ENCODE measurements at regions of chr17 and their contacts with region 1.

Region 1: DNA sequence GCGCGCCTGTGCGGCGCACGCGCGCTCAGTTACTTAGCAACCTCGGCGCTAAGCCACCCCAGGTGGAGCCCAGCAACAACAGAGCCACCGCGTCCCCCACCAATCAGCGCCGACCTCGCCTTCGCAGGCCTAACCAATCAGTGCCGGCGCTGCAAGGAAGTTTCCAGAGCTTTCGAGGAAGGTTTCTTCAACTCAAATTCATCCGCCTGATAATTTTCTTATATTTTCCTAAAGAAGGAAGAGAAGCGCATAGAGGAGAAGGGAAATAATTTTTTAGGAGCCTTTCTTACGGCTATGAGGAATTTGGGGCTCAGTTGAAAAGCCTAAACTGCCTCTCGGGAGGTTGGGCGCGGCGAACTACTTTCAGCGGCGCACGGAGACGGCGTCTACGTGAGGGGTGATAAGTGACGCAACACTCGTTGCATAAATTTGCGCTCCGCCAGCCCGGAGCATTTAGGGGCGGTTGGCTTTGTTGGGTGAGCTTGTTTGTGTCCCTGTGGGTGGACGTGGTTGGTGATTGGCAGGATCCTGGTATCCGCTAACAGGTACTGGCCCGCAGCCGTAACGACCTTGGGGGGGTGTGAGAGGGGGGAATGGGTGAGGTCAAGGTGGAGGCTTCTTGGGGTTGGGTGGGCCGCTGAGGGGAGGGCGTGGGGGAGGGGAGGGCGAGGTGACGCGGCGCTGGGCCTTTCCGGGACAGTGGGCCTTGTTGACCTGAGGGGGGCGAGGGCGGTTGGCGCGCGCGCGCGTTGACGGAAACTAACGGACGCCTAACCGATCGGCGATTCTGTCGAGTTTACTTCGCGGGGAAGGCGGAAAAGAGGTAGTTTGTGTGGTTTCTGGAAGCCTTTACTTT is at the start of gene UBB:
- DNase-seq: peak; percentile 99
- ATAC-seq: peak; percentile 96
- H3K4me3 ChIP-seq: peak within 1 kb of the TSS; percentile 82
- H3K27ac ChIP-seq: peak within 1 kb of the TSS; percentile 97
- H3K4me1 ChIP-seq: peaks cover 4% of the 10 kb centered on the region; the same call in 1 of the 2 replicates
- H3K27me3 ChIP-seq: no peaks in the 10 kb centered on the region
- CTCF ChIP-seq: 0 out of 2 replicates have a peak, but pooled peaks have one; percentile 11
- POLR2A ChIP-seq: peak; percentile 99
- RAD21 ChIP-seq: no peak
- total RNA-seq, gene UBB: 3,383 and 4,283 TPM in 2 replicates

Region 2: DNA sequence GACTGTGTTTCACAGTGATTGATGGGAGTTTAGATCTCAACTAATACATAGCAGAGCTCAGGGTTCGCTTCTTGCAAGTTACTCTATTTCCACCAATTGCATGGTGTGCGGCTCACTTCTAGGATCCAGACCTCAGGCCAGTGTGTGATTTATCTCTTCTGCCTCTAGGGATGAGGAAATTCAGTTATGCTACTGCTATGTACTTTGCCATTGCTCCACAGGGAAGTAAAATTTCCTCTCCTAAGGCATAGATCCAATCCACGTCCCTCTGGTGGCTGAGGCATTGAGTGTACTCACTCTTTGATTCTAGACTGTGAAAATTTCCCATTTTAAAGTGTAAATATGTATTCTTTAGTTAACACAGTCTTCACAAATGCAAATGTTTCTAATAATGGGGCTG is 1865.9 kb before region 1 on chr17:
- CTCF ChIA-PET with region 1: no interaction called
- POLR2A ChIA-PET with region 1: no interaction called
- dilution Hi-C with region 1: no loop called
- in situ Hi-C with region 1: no loop called
- intact Hi-C with region 1: no loop called
- DNase-seq: no peak
- ATAC-seq: no peak; the same call in 1 of the 2 replicates
- H3K4me3 ChIP-seq: no peak overlapping the region
- H3K27ac ChIP-seq: no peak overlapping the region
- H3K4me1 ChIP-seq: no peaks in the 10 kb centered on the region
- H3K27me3 ChIP-seq: no peaks in the 10 kb centered on the region; the same call in 1 of the 2 replicates
- CTCF ChIP-seq: no peak
- POLR2A ChIP-seq: no peak
- RAD21 ChIP-seq: no peak

Region 3: DNA sequence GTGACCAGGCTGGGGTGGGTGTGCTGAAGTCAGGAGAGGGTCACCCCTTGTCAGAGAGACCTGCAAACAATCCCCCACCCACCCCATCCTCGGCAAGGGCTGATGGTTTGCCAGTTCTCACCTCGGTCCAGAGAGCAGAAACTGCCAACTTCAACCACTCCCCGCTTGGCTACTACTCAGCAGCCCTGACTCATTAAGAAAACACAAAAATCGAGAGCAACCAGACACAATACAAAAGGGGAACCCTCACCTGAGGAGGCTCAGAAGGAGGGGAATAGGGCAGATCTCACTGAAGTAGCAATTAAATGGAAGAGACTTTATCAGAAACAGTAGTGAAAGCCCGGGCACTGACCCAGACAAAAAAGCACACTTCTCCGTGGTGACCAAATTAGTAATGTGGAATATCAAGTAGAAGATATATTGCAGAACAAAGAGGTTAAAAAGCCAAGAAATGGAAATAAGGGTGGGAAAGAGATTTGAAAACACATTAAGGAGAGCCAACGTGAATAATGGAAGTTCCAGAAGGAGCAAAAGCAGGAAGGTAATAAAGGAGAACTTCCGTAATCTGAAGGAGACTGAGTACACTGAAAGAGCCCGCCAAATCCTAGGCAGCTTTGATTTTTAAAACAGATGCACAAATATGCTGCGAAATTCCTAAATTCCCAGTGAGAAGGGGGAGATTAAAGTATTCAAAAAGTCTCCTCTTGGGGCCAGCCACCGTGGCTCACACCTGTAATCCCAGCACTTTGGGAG is 51.2 kb before region 1 on chr17:
- CTCF ChIA-PET with region 1: no interaction called
- POLR2A ChIA-PET with region 1: interaction called, 10 read pairs
- dilution Hi-C with region 1: no loop called
- in situ Hi-C with region 1: no loop called
- intact Hi-C with region 1: no loop called
- DNase-seq: peak; percentile 56
- ATAC-seq: peak; percentile 73
- H3K4me3 ChIP-seq: no peak overlapping the region
- H3K27ac ChIP-seq: no peak overlapping the region
- H3K4me1 ChIP-seq: no peaks in the 10 kb centered on the region
- H3K27me3 ChIP-seq: no peaks in the 10 kb centered on the region
- CTCF ChIP-seq: no peak
- POLR2A ChIP-seq: no peak
- RAD21 ChIP-seq: no peak

Region 4: GRCh38 chr17:16363749-16364536 is 16.9 kb before region 1 on chr17:
- CTCF ChIA-PET with region 1: interaction called, 10 read pairs
- POLR2A ChIA-PET with region 1: interaction called, 8 read pairs
- dilution Hi-C with region 1: no loop called
- in situ Hi-C with region 1: no loop called
- intact Hi-C with region 1: no loop called
- DNase-seq: peak; percentile 69
- ATAC-seq: peak; percentile 99
- H3K4me3 ChIP-seq: no peak overlapping the region
- H3K27ac ChIP-seq: no peak overlapping the region
- H3K4me1 ChIP-seq: no peaks in the 10 kb centered on the region
- H3K27me3 ChIP-seq: no peaks in the 10 kb centered on the region
- CTCF ChIP-seq: peak; percentile 90
- POLR2A ChIP-seq: no peak
- RAD21 ChIP-seq: peak; percentile 77

Region 5: GRCh38 chr17:16415031-16415924 is 34.4 kb after region 1 on chr17 and contains the start of gene TRPV2:
- CTCF ChIA-PET with region 1: no interaction called
- POLR2A ChIA-PET with region 1: no interaction called
- dilution Hi-C with region 1: no loop called
- in situ Hi-C with region 1: no loop called
- intact Hi-C with region 1: loop called (anchors 1 kb)
- DNase-seq: no peak
- ATAC-seq: peak; percentile 10; the same call in 1 of the 2 replicates
- H3K4me3 ChIP-seq: peak within 1 kb of the TSS; percentile 61
- H3K27ac ChIP-seq: peak within 1 kb of the TSS; percentile 65
- H3K4me1 ChIP-seq: peaks cover 33% of the 10 kb centered on the region
- H3K27me3 ChIP-seq: no peaks in the 10 kb centered on the region
- CTCF ChIP-seq: 0 out of 2 replicates have a peak, but pooled peaks have one; percentile 18
- POLR2A ChIP-seq: no peak
- RAD21 ChIP-seq: no peak
- total RNA-seq, gene TRPV2: 27.2 and 30.8 TPM in 2 replicates

Region 6: DNA sequence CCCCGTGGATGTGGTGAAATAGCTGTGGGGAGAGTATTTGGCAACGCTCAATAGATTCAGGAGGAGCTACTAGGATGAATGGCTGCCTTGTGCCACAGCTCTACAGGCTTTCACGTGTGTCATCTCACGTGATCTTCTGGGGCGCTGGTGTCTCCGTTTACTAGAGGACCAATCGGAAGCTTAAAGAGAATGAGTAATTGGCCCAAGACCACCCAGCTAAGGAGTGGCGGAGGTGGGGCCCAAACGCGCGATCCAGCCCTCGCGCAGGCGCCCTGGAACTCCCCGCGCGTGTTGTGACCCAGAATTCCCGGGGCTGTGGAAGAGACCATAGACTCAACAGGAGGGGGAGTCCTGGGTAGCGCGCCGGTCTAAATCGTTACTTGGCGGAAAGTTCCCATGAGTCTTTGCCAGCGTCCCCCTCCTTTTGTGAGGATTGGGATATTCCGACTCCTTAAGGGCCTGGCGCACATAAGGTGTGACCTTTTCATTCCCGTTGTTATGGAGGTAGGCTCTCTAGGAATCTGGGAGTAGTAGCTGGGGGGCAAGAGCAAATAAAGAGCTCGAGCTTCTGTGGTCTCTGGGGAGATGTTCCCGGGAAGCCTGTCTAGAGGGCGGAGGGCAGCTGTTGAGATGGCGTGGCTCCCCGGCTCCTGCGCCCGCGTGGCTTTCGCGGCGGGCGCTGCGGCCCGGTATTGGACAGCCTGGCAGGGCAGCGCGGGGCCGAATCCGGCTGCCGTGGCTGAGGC is 57.9 kb after region 1 on chr17:
- CTCF ChIA-PET with region 1: no interaction called
- POLR2A ChIA-PET with region 1: interaction called, 9 read pairs
- dilution Hi-C with region 1: no loop called
- in situ Hi-C with region 1: loop called (anchors 5 kb)
- intact Hi-C with region 1: loop called (anchors 1 kb)
- DNase-seq: peak; percentile 100
- ATAC-seq: peak; percentile 93
- H3K4me3 ChIP-seq: peak overlapping the region; percentile 67
- H3K27ac ChIP-seq: peak overlapping the region; percentile 87
- H3K4me1 ChIP-seq: peaks cover 17% of the 10 kb centered on the region
- H3K27me3 ChIP-seq: no peaks in the 10 kb centered on the region
- CTCF ChIP-seq: no peak
- POLR2A ChIP-seq: peak; percentile 99
- RAD21 ChIP-seq: peak; percentile 3; the same call in 1 of the 2 replicates

Region 7: DNA sequence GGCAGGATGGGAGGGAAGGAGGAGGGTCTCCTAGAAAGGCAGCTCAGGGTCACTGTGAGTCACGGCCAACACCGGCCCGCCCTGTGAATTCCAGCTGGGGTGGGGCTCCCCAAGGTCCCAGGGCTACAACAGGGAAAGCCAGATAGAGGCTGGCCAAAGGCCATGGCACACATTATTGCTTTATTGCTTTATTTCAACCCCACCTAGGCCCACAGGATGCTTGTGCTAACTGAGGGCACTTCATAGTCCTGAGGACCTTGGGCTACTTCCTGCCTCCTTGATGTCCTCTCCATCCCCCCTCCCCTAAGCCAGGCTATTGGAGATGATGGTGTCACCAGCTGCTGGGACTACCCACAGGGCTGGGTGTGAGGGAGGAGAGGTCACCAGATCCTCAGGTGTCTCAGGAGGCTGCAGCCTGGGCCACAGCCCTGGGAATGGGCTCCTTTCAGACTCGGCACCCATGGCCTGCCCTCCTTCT is 85.0 kb after region 1 on chr17:
- CTCF ChIA-PET with region 1: no interaction called
- POLR2A ChIA-PET with region 1: no interaction called
- dilution Hi-C with region 1: no loop called
- in situ Hi-C with region 1: no loop called
- intact Hi-C with region 1: no loop called
- DNase-seq: no peak
- ATAC-seq: no peak
- H3K4me3 ChIP-seq: no peak overlapping the region
- H3K27ac ChIP-seq: no peak overlapping the region
- H3K4me1 ChIP-seq: peaks cover 12% of the 10 kb centered on the region
- H3K27me3 ChIP-seq: no peaks in the 10 kb centered on the region
- CTCF ChIP-seq: no peak
- POLR2A ChIP-seq: no peak
- RAD21 ChIP-seq: no peak

Region 8: DNA sequence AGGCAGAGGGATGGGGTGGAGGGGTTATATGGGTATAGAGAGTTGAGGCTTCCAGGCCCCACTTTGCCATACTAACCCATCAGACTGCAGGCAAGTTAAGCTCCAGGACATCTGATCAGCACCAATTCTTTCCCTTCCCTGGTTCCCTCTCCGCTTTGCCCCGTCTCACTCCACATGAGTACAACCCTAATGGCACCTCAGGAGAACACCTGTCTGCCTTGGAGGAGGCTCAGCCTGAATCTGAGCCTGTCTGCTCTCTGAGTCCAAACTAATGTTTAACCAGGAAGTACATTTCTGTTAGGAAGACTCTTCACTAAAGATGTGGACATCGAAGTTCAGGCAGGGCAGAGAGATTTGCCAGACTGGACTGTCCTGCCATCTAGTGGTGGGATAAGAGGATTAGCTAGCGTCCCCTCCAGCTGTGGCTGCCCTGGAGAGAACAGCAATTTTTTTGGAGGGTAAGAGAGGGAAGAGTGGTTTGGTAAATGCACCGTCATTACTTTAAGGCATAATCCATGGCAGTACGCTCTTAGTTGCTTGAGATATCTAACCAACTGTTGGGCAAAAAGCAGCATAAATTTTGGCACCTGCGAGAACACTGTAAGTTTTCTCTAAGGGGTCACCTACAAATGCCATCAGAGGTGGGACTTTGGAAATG is 140.3 kb after region 1 on chr17:
- CTCF ChIA-PET with region 1: interaction called, 3 read pairs
- POLR2A ChIA-PET with region 1: interaction called, 10 read pairs
- dilution Hi-C with region 1: no loop called
- in situ Hi-C with region 1: no loop called
- intact Hi-C with region 1: loop called (anchors 1 kb)
- DNase-seq: peak; percentile 91
- ATAC-seq: peak; percentile 91
- H3K4me3 ChIP-seq: no peak overlapping the region
- H3K27ac ChIP-seq: peak overlapping the region; percentile 67
- H3K4me1 ChIP-seq: peaks cover 4% of the 10 kb centered on the region
- H3K27me3 ChIP-seq: no peaks in the 10 kb centered on the region; the same call in 1 of the 2 replicates
- CTCF ChIP-seq: peak; percentile 95
- POLR2A ChIP-seq: peak; percentile 47; the same call in 1 of the 2 replicates
- RAD21 ChIP-seq: peak; percentile 97